ENCODE measurements at regions of chr1 and their contacts with region 1.

Region 1: DNA sequence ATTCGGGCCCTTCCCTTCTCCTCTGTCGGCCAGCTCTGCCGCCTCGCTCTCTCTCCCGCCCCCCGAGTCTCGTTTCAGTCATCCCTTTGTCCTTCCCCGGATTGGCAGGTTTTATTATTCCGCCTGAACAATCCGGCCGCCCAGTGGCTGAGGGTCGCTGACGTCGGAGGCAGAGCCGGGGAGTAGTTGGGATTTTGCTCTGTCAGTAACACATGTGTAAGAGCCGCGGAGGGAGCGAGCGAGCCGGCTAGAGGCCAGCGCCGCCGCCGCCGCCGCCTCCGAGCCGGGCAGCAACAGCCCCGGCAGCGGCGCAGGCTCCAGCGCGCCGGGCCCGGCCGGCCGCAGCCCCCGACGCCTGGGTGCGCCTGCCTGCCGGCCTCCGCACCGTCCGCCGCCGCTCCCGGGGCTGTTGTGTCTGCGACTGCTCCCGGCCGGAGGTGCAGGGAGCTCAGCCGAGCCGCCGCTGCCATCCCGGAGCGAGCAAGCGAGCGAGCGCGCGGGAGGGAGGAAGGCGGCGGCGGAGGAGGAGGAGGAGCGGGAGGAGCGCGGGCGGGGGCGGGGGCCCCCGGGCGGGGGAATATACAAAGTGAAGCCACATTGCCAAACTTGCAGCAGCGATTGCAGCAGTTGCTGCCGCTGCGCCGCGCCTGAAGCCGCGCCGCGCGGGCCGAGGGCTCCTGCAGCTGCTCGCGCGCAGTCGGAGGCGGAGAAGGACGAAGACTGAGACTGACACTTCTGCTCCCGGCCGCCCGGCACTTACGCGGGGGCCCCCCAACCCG is at the start of gene LMO4:
- DNase-seq: peak; percentile 94
- H3K4me3 Mint-ChIP-seq: peak within 1 kb of the TSS; percentile 89
- H3K27ac Mint-ChIP-seq: peak within 1 kb of the TSS; percentile 94
- H3K4me1 Mint-ChIP-seq: peaks cover 35% of the 10 kb centered on the region
- H3K27me3 Mint-ChIP-seq: peaks cover 9% of the 10 kb centered on the region
- total RNA-seq, gene LMO4: 23.7 and 26.1 TPM in 2 replicates

Region 2: DNA sequence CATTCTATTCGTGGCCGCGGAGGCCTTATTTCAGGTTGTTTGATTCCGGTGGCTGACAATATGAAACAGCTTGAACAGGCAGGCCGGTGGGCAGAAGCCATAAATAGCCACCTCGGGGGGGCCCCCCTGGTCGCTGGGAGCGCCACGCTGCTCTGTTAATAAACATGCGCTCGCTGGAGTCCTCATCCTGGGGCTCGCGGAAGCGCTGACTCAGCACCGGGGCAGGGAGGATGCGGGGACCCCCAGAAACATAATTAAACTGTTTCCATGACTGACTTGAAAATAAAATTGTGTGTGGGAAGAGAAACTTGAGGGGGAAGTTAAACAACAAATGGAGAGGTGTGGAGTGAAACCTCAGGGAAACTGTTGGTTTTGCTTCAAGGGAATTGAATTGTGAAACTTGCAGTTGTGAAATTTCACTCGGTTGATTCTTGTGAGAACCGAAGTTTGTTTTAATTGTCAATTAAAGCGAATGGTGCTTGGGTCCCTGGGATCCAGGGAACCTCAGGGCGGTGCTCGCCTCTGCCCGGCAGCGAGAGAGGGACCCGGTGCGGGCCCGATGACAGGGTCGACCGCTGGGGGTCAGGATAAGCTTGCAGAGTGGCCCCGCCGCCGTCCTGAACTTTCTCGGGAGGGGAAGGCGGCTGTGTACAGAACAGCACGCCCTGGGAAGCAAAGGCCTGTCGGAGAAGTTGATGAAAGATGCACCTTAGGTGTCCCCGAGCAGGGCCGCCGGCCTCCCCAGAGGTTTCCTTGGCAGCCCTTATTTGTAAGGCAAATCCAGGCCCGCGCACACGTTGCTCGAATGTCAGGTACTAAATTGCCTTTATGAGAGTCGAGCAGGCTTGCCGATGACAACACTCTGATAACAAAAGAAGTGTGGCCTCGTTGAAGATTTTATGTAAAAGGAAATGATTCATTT is 176.7 kb before region 1 on chr1:
- intact Hi-C with region 1: loop called (anchors 2 kb)
- DNase-seq: peak; percentile 71
- H3K4me3 Mint-ChIP-seq: peak overlapping the region; percentile 79
- H3K27ac Mint-ChIP-seq: peak overlapping the region; percentile 56
- H3K4me1 Mint-ChIP-seq: peaks cover 14% of the 10 kb centered on the region
- H3K27me3 Mint-ChIP-seq: peaks cover 51% of the 10 kb centered on the region

Region 3: DNA sequence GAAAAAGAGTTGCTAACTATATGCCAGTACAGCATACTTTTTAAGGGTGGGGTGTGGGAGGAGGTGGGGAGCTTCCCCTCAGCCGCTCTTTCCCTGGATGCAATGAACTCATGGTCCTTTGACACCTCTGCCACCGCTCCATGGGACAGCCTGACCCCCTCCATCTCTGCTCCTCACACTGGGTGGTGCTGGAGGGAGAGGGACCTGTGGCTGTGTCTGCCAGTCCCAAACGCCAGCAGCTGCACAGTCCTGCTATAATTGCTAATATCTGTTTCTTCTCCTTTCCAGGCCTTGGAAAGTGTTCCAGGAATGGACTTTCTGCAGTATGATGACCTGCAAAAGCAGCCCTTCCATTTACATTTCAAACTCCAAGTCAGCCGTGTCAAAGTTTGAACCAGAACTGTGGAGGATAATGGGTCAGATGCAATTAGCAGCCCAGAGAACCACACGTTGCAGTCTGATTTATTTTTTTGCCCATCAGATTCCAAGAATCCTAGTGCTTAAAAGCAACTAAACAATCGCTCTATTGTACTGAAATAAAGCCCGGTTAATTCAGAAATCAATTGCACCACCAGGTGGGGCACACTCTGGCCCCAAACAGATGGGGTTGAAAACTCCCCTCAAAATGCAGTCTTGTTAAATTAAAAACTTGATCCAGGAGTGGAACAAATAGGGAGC is 160.5 kb before region 1 on chr1:
- intact Hi-C with region 1: no loop called
- DNase-seq: no peak
- H3K4me3 Mint-ChIP-seq: no peak overlapping the region
- H3K27ac Mint-ChIP-seq: no peak overlapping the region
- H3K4me1 Mint-ChIP-seq: no peaks in the 10 kb centered on the region
- H3K27me3 Mint-ChIP-seq: peaks cover 12% of the 10 kb centered on the region

Region 4: GRCh38 chr1:87402241-87403002 is 74.0 kb after region 1 on chr1:
- intact Hi-C with region 1: loop called (anchors 2 kb)
- DNase-seq: no peak
- H3K4me3 Mint-ChIP-seq: no peak overlapping the region
- H3K27ac Mint-ChIP-seq: no peak overlapping the region
- H3K4me1 Mint-ChIP-seq: peaks cover 19% of the 10 kb centered on the region
- H3K27me3 Mint-ChIP-seq: peaks cover 30% of the 10 kb centered on the region

Region 5: GRCh38 chr1:87501738-87502137 is 173.3 kb after region 1 on chr1:
- intact Hi-C with region 1: loop called (anchors 10 kb)
- DNase-seq: no peak
- H3K4me3 Mint-ChIP-seq: no peak overlapping the region
- H3K27ac Mint-ChIP-seq: no peak overlapping the region
- H3K4me1 Mint-ChIP-seq: no peaks in the 10 kb centered on the region
- H3K27me3 Mint-ChIP-seq: peaks cover 4% of the 10 kb centered on the region